ENCODE measurements at regions of chr16 and their contacts with region 1.

Region 1: DNA sequence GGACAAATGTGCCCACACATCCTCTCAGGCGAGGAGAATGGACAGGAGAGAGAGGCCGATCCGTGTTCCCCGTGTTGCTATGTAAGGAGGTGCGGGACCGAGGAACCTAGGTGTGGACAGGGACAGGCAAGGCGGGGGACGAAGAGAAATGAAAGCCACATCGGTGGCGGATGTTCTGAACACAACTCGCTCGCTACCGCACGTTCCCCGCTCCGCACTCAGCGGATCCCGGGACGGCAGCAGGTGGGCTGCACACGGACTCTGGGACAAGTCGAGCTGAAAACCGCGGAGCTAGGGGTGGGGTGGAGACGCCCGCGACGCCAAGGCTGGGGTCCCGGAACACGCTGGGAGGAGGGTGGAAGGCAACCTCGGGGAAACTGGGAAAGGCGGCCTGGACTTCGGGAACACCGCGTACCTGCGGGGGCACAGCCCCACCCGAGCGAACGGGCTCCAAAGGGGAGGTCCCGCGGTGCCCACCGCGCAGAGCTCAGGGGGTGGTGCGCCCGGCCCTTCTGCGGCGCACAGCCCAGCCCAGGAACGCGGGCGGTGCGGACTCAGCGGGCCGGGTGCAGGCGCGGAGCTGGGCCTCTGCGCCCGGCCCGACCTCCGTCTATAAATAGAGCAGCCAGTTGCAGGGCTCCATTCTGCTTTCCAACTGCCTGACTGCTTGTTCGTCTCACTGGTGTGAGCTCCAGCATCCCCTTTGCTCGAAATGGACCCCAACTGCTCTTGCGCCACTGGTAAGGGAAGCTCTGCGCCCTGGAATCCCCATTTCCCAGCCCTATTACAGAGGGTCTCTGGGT is at the start of gene MT1E:
- DNase-seq: no peak
- H3K4me3 ChIP-seq: peak within 1 kb of the TSS; percentile 61 to 78 (median 72)
- H3K27ac ChIP-seq: peak within 1 kb of the TSS; percentile 88 to 94 (median 92)
- H3K4me1 ChIP-seq: peaks cover 20 to 40% (median 30%) of the 10 kb centered on the region in 4 donors
- H3K27me3 ChIP-seq: no peaks in the 10 kb centered on the region
- CTCF ChIP-seq: no peak
- EP300 ChIP-seq: peak; percentile 92
- POLR2A ChIP-seq: peak; percentile 92
- total RNA-seq, gene MT1E: 57.7 to 428 (median 146) TPM

Region 2: GRCh38 chr16:56425439-56425832 is 199.9 kb before region 1 on chr16 and contains the start of gene AMFR:
- intact Hi-C with region 1: loop called (anchors 10 kb)
- DNase-seq: no peak
- H3K4me3 ChIP-seq: peak within 1 kb of the TSS; percentile 74 to 98 (median 83)
- H3K27ac ChIP-seq: peak within 1 kb of the TSS; percentile 91 to 95 (median 94)
- H3K4me1 ChIP-seq: peaks cover 20 to 46% (median 38%) of the 10 kb centered on the region in 4 donors
- H3K27me3 ChIP-seq: no peaks in the 10 kb centered on the region
- CTCF ChIP-seq: peak; percentile 47 to 61 (median 60)
- EP300 ChIP-seq: no peak
- POLR2A ChIP-seq: no peak
- total RNA-seq, gene AMFR: 150 to 205 (median 179) TPM

Region 3: DNA sequence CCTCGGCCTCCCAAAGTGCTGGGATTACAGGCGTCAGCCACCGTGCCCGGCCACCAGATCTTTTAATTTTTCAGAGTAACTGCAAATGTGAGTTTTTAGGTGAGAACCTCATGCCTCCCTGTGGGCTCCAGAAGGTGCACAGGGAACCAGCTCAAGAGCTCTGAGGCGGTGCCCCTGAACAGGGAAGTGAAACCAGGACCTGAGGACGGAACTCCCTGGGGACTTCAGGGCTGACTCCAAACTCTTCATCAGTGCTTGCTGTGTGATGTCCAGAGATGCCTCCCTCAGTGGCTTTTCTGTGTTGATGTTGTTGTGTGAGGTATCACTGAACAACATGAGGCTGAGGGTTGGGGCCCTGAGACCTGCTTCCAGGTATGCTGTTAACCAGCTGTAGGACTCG is 263.5 kb after region 1 on chr16:
- intact Hi-C with region 1: no loop called
- DNase-seq: no peak
- H3K4me3 ChIP-seq: no peak overlapping the region
- H3K27ac ChIP-seq: no peak overlapping the region
- H3K4me1 ChIP-seq: no peaks in the 10 kb centered on the region
- H3K27me3 ChIP-seq: no peaks in the 10 kb centered on the region
- CTCF ChIP-seq: no peak
- EP300 ChIP-seq: no peak
- POLR2A ChIP-seq: no peak

Measured in esophagus muscularis mucosa (tissue), 4 donors.